ENCODE measurements at regions of chr6 and their contacts with region 1.

Region 1: DNA sequence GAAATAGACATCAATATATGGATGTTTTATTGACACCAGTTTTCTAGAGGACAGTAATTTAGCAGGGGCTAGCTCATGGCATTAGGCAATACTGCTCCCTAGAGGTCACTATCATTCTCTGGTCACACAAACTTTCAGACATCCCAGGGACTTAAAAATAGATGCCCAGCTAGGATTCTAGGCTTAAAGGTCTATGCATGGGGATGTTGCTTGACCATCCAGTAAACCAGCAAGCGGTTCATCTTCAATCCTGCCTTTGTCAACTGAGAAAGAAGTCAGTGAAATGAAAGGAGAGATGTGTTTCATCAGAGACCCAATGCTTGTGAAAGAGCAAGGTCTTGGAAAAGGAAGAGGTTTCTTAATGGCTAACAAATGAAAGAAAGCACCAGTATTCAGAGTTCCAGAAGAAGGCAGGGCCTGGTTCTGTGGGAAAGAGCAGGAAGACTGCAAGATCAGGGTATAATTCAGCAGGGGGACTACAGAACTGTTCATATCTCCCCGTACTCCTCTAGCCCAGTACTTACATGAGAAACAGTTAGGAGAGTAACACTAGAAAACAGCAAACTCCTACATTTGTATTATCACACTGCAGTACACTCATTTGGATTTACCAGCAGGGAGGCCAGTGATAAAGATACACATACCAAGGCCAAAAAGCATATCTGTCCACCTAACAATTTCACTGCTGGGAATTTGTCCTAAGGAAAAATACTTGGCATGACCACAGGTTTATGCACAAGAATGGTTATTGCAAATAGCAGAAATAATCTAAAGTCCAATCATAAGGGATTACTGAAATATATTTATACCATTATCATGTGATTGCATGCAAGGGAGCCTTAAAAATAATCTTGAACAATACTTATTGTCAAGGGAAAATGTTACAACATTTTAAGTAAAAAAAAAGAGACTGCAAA is 151.4 kb upstream of the LAMA2 start:
- DNase-seq: no peak

Region 2: DNA sequence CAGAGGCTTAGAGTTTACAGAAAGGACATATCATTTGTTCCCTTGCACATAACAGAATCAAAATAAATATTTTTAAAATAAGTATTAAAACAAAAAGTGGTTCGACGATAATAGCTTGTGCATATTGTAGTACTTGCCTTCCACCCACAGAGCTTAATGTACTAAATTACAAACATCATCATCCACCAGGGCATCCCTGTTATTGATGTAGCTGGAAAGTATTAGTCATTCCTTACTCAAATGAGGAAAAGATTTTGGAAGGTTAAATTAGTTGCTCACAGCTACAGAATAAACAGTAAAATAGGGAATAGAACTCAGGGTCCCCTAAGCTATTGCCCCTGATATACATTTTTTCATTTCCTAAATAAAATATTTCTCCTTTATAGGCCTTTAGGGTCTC is 361.4 kb before region 1 on chr6:
- intact Hi-C with region 1: loop called in 1 of 2 experiments (anchors 10 kb)
- DNase-seq: no peak

Region 3: DNA sequence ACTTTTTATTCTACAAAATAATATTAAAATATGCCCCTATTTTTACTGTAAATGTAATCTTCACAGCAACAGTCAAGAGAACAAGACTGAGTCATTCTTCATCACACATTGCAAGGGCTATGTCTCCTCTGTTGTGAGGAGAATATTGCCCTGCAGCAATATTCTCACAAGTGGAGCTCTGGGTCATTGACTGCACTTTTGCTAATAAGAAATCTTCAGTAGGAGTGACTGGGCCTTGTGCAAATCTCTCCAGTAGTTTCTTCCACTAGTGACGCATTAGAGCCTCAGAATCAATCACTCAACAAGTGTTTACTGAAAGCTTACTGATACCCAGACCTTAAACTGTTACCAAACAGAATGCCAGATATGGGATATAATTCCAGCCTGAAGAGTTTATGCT is 200.6 kb after region 1 on chr6:
- intact Hi-C with region 1: no loop called
- DNase-seq: no peak

Region 4: GRCh38 chr6:128979071-128979470 is 247.6 kb after region 1 on chr6:
- intact Hi-C with region 1: no loop called
- DNase-seq: no peak

Region 5: GRCh38 chr6:129498950-129499842 is 767.7 kb after region 1 on chr6:
- intact Hi-C with region 1: no loop called
- DNase-seq: no peak

Measured in posterior vena cava (tissue), 2 donors.